Left ventricle myocardium inferior (tissue), 1 donor: ENCODE measurements at regions of chr2 and their contacts with region 1.

Region 1: GRCh38 chr2:74715078-74715791 is 61.2 kb downstream of the SEMA4F start:
- DNase-seq: peak; percentile 74
- H3K4me3 ChIP-seq: peak overlapping the region; percentile 70
- H3K27ac ChIP-seq: peak overlapping the region; percentile 37
- H3K4me1 ChIP-seq: peaks cover 8% of the 10 kb centered on the region
- H3K27me3 ChIP-seq: peaks cover 50% of the 10 kb centered on the region
- CTCF ChIP-seq: peak; percentile 94

Region 2: GRCh38 chr2:74619651-74620297 is 95.5 kb before region 1 on chr2:
- intact Hi-C with region 1: no loop called
- DNase-seq: no peak
- H3K4me3 ChIP-seq: no peak overlapping the region
- H3K27ac ChIP-seq: no peak overlapping the region
- H3K4me1 ChIP-seq: no peaks in the 10 kb centered on the region
- H3K27me3 ChIP-seq: peaks cover 47% of the 10 kb centered on the region
- CTCF ChIP-seq: no peak

Region 3: GRCh38 chr2:74856004-74856578 is 140.9 kb after region 1 on chr2:
- intact Hi-C with region 1: no loop called
- DNase-seq: no peak
- H3K4me3 ChIP-seq: no peak overlapping the region
- H3K27ac ChIP-seq: no peak overlapping the region
- H3K4me1 ChIP-seq: peaks cover 8% of the 10 kb centered on the region
- H3K27me3 ChIP-seq: no peaks in the 10 kb centered on the region
- CTCF ChIP-seq: no peak

Region 4: DNA sequence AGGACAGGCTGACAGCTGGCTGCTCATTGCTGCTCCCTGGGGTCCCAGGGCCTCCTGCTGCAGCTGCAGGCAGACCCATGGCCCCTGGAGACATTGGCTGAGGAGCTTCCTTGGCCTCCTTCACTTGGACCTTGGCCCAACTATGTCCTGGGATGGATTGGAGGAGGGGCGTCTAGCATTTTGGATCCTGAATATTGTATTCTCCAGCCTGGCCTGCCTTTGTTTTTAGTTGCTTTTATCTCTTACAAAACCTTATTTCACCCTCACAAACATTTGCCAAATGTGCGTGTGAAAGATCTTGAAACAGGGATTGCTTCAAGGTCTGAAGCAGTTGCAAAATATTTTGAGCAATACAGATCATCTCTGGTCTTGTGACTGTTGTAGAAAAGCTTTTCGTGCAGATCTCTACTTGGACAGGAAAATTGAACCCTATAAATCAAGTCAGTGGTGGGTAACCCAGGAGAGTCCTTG is 159.7 kb after region 1 on chr2:
- intact Hi-C with region 1: loop called (anchors 2 kb)
- DNase-seq: peak; percentile 23
- H3K4me3 ChIP-seq: no peak overlapping the region
- H3K27ac ChIP-seq: peak overlapping the region; percentile 30
- H3K4me1 ChIP-seq: peaks cover 16% of the 10 kb centered on the region
- H3K27me3 ChIP-seq: no peaks in the 10 kb centered on the region
- CTCF ChIP-seq: no peak